Activated CD4-positive, alpha-beta T cell treated with anti-CD3 and anti-CD28 coated beads for 36 hours (primary cell): ENCODE measurements at regions of chr3 and their contacts with region 1.

Region 1: GRCh38 chr3:67294341-67294740 is 296.2 kb downstream of the KBTBD8 start:
- DNase-seq: no peak
- ATAC-seq: no peak
- H3K4me3 Mint-ChIP-seq: no peak overlapping the region
- H3K27ac Mint-ChIP-seq: no peak overlapping the region
- H3K4me1 Mint-ChIP-seq: peaks cover 8% of the 10 kb centered on the region
- H3K27me3 Mint-ChIP-seq: no peaks in the 10 kb centered on the region

Region 2: DNA sequence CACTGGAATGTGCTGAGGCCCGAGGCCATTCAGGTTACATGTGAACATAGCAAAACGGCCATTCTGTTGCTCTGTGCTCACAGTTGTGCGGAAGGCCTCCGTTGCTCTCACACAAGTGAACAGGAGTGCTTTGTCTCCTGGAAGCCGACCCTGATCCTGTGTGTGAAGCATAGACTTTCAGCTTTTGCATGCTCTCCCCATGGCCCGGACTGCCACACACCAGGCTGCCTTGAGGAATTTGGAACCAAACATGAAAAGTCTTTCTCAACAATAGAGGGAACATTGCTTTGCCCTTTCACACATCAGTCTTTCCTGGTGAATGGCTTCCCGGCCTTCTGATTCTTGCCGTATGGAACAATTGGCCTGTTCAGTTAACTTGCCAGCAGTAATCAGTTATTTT is 638.7 kb before region 1 on chr3:
- CTCF ChIA-PET with region 1: no interaction called
- POLR2A ChIA-PET with region 1: interaction called, 10 read pairs
- intact Hi-C with region 1: no loop called
- DNase-seq: no peak
- ATAC-seq: no peak
- H3K4me3 Mint-ChIP-seq: no peak overlapping the region
- H3K27ac Mint-ChIP-seq: no peak overlapping the region
- H3K4me1 Mint-ChIP-seq: no peaks in the 10 kb centered on the region
- H3K27me3 Mint-ChIP-seq: peaks cover 2% of the 10 kb centered on the region

Region 3: DNA sequence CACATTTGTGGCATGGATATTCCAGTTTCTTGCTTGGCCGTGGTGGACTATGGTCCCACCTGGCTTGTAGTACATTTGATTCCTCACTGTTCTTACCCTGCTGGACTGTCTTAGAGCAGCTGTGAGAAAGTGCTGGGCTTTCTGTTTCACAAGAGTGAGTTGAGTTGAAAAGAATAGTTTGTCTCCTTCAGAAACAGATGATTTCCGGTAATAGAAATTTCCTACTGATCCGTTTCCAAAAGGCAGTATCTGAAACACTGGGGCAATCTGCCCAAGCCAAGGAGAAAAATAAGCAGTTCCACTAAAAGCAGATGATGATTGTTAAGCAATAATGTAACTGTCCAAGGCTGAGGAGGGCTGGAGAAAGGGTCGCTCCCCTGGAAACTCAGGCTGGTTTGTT is 264.1 kb after region 1 on chr3:
- CTCF ChIA-PET with region 1: no interaction called
- POLR2A ChIA-PET with region 1: no interaction called
- intact Hi-C with region 1: no loop called
- DNase-seq: no peak
- ATAC-seq: no peak
- H3K4me3 Mint-ChIP-seq: no peak overlapping the region
- H3K27ac Mint-ChIP-seq: no peak overlapping the region
- H3K4me1 Mint-ChIP-seq: peaks cover 7% of the 10 kb centered on the region
- H3K27me3 Mint-ChIP-seq: no peaks in the 10 kb centered on the region